ENCODE measurements at regions of chr16 and their contacts with region 1.

Region 1: DNA sequence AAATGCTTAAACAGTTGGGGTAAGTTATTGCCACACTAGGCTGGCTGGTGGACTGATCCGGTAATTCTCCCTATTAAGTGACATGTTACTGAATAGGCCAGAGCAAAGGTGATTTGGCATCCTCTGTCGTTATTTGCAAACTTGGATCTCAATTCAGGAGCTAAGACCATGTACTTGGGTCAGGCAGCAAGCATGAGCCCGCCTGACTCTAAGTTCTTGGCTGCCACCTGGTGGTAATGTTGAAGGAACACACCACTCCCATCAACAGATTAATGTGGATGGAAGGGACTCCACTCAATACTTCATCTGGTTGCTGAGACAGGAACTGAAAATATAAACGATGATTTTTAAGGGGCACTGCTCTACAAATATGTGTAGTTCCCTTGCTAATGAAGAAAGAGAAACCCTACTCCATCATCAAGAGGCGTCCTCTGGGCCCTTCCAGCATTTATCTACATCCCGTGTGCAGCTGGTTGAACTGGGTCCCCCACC is 70.8 kb downstream of the EMP2 start:
- DNase-seq: peak; percentile 88
- H3K4me3 ChIP-seq: no peak overlapping the region
- H3K27ac ChIP-seq: no peak overlapping the region
- H3K4me1 ChIP-seq: no peaks in the 10 kb centered on the region
- CTCF ChIP-seq: peak; percentile 93

Region 2: GRCh38 chr16:10136916-10137315 is 372.7 kb before region 1 on chr16:
- CTCF ChIA-PET with region 1: no interaction called
- POLR2A ChIA-PET with region 1: no interaction called
- intact Hi-C with region 1: no loop called
- DNase-seq: no peak
- H3K4me3 ChIP-seq: no peak overlapping the region
- H3K27ac ChIP-seq: no peak overlapping the region
- H3K4me1 ChIP-seq: no peaks in the 10 kb centered on the region
- CTCF ChIP-seq: no peak

Region 3: DNA sequence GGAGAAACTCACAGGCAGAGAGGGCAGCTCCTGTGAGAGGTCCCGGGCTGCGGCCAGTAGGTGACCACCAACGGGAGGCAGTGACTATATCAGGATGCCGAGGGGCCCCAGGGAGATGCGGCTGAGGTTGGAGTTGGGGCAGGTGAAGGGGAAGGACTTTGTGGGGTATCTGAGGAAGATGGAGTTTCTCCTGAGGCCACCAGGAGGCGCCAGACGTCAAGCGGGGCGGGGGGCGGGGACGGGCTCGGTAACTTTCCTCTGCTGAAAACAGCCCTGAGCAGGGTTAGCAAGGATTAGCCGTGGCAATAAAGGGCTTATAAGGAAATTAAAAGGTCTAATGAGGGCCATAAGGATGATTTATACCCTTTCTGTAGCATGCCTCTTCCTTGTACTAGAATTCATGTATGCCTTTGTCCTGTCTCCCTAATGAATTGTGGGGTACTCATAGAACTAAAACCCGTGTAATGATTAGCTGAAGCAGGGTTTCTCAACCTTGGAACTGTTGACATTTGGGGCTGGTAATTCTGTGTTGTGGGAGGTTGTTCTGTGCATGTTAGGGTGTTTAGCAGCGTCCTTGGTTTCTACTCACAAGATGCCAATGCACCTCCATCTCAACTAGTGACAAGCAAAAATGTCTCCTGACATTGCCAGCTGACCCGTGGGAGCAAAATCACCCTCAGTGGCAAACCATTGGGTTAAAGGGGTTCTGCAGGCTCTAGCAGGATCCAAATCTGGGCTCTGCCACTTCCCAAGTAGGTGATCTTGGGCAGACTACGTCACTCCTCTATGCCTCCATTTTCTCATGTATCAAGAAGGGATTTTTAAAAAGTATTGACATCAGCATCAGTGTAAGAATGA is 252.6 kb before region 1 on chr16:
- CTCF ChIA-PET with region 1: interaction called, 11 read pairs
- POLR2A ChIA-PET with region 1: interaction called, 3 read pairs
- intact Hi-C with region 1: loop called (anchors 1 kb)
- DNase-seq: peak; percentile 67
- H3K4me3 ChIP-seq: no peak overlapping the region
- H3K27ac ChIP-seq: no peak overlapping the region
- H3K4me1 ChIP-seq: peaks cover 17% of the 10 kb centered on the region
- CTCF ChIP-seq: peak; percentile 85

Region 4: GRCh38 chr16:10322723-10323527 is 186.7 kb before region 1 on chr16:
- CTCF ChIA-PET with region 1: no interaction called
- POLR2A ChIA-PET with region 1: no interaction called
- intact Hi-C with region 1: no loop called
- DNase-seq: no peak
- H3K4me3 ChIP-seq: no peak overlapping the region
- H3K27ac ChIP-seq: no peak overlapping the region
- H3K4me1 ChIP-seq: no peaks in the 10 kb centered on the region
- CTCF ChIP-seq: no peak

Region 5: DNA sequence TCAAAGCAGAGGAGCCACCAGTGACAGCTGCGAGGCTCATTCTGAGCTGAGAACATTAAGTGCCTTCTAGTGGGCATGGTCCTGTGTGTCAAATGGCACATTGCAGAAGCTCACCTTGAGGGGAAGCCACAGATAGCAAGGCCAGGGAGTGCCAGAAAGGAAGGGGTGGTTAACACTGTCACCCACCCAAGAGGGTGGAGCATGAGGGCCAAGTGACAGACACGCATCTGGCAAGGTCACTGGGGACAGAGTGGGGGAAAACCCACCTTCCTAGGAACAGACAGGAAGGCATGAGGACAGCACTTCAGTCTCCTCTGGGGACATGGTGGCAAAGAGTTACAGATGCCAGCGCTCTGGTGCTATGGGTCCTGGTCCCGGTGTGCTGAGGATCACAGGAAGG is 256.2 kb after region 1 on chr16:
- CTCF ChIA-PET with region 1: no interaction called
- POLR2A ChIA-PET with region 1: no interaction called
- intact Hi-C with region 1: no loop called
- DNase-seq: no peak
- H3K4me3 ChIP-seq: no peak overlapping the region
- H3K27ac ChIP-seq: no peak overlapping the region
- H3K4me1 ChIP-seq: no peaks in the 10 kb centered on the region
- CTCF ChIP-seq: no peak

Region 6: GRCh38 chr16:10776280-10776679 is 266.7 kb after region 1 on chr16:
- CTCF ChIA-PET with region 1: no interaction called
- POLR2A ChIA-PET with region 1: no interaction called
- intact Hi-C with region 1: no loop called
- DNase-seq: no peak
- H3K4me3 ChIP-seq: no peak overlapping the region
- H3K27ac ChIP-seq: no peak overlapping the region
- H3K4me1 ChIP-seq: no peaks in the 10 kb centered on the region
- CTCF ChIP-seq: no peak